Activated naive CD8-positive, alpha-beta T cell treated with anti-CD3 and anti-CD28 coated beads, Interleukin-2, amount 10 ng/mL, durations not matched to agents 7 days and 5 days (primary cell): ENCODE measurements at regions of chr17 and their contacts with region 1.

Region 1: GRCh38 chr17:42554250-42555121 is 1.8 kb downstream of the HSD17B1 start:
- DNase-seq: peak; percentile 87
- ATAC-seq: peak; percentile 92
- H3K4me3 Mint-ChIP-seq: peak overlapping the region; percentile 94
- H3K27ac Mint-ChIP-seq: peak overlapping the region; percentile 94
- H3K4me1 Mint-ChIP-seq: peaks cover 14% of the 10 kb centered on the region
- H3K27me3 Mint-ChIP-seq: no peaks in the 10 kb centered on the region

Region 2: DNA sequence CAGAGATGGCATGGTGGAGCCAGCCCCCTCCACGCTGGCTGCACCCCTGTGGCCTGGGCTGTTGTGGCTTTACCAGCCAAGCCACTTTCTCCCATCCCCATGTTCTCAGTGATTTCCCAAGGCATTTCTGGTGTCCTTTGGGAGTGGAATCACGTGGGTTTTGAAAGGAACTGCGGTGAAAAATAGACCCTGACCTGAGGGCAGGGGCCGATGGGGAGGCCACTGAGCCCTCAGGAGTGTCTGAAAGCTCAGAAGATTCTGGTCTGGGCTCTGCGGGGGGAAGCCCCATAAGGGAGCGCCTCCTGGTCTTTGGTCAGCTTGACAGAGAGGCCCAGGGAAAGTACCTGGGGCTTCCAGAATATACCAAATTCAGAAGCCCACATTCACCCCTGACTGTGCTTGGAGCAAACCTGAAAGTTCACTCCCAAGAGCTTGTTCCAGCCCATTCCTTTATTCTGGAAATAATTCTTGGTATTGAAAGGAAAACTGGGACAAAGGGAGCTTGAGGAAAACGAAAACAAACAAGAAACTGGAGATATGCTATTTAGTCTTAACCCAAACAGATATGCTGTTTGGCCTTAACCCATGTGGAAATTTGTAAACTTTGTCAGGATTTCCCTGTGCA is 41.7 kb before region 1 on chr17:
- POLR2A ChIA-PET with region 1: no interaction called
- DNase-seq: no peak
- ATAC-seq: no peak
- H3K4me3 Mint-ChIP-seq: no peak overlapping the region
- H3K27ac Mint-ChIP-seq: no peak overlapping the region
- H3K4me1 Mint-ChIP-seq: peaks cover 12% of the 10 kb centered on the region
- H3K27me3 Mint-ChIP-seq: peaks cover 4% of the 10 kb centered on the region

Region 3: GRCh38 chr17:42536048-42536371 is 18.5 kb before region 1 on chr17 and contains the start of gene NAGLU:
- POLR2A ChIA-PET with region 1: interaction called, 19 read pairs
- DNase-seq: peak; percentile 91
- ATAC-seq: peak; percentile 87
- H3K4me3 Mint-ChIP-seq: peak within 1 kb of the TSS; percentile 88
- H3K27ac Mint-ChIP-seq: peak within 1 kb of the TSS; percentile 79
- H3K4me1 Mint-ChIP-seq: peaks cover 37% of the 10 kb centered on the region
- H3K27me3 Mint-ChIP-seq: peaks cover 2% of the 10 kb centered on the region
- total RNA-seq, gene NAGLU: 22.9 to 23.9 TPM

Region 4: GRCh38 chr17:42541041-42541833 is 13.2 kb before region 1 on chr17:
- POLR2A ChIA-PET with region 1: interaction called, 19 read pairs
- DNase-seq: peak; percentile 64
- ATAC-seq: peak; percentile 37
- H3K4me3 Mint-ChIP-seq: peak overlapping the region; percentile 78
- H3K27ac Mint-ChIP-seq: peak overlapping the region; percentile 88
- H3K4me1 Mint-ChIP-seq: peaks cover 32% of the 10 kb centered on the region
- H3K27me3 Mint-ChIP-seq: no peaks in the 10 kb centered on the region

Region 5: GRCh38 chr17:42566883-42567573 is 12.5 kb after region 1 on chr17 and contains the start of gene MLX:
- POLR2A ChIA-PET with region 1: interaction called, 21 read pairs
- DNase-seq: peak; percentile 96
- ATAC-seq: peak; percentile 74
- H3K4me3 Mint-ChIP-seq: peak within 1 kb of the TSS; percentile 97
- H3K27ac Mint-ChIP-seq: peak within 1 kb of the TSS; percentile 98
- H3K4me1 Mint-ChIP-seq: peaks cover 35% of the 10 kb centered on the region
- H3K27me3 Mint-ChIP-seq: no peaks in the 10 kb centered on the region
- total RNA-seq, gene MLX: 62.9 to 64.9 TPM

Region 6: GRCh38 chr17:42586514-42587230 is 32.2 kb after region 1 on chr17:
- POLR2A ChIA-PET with region 1: no interaction called
- DNase-seq: no peak
- ATAC-seq: no peak
- H3K4me3 Mint-ChIP-seq: no peak overlapping the region
- H3K27ac Mint-ChIP-seq: no peak overlapping the region
- H3K4me1 Mint-ChIP-seq: peaks cover 6% of the 10 kb centered on the region
- H3K27me3 Mint-ChIP-seq: no peaks in the 10 kb centered on the region

Region 7: DNA sequence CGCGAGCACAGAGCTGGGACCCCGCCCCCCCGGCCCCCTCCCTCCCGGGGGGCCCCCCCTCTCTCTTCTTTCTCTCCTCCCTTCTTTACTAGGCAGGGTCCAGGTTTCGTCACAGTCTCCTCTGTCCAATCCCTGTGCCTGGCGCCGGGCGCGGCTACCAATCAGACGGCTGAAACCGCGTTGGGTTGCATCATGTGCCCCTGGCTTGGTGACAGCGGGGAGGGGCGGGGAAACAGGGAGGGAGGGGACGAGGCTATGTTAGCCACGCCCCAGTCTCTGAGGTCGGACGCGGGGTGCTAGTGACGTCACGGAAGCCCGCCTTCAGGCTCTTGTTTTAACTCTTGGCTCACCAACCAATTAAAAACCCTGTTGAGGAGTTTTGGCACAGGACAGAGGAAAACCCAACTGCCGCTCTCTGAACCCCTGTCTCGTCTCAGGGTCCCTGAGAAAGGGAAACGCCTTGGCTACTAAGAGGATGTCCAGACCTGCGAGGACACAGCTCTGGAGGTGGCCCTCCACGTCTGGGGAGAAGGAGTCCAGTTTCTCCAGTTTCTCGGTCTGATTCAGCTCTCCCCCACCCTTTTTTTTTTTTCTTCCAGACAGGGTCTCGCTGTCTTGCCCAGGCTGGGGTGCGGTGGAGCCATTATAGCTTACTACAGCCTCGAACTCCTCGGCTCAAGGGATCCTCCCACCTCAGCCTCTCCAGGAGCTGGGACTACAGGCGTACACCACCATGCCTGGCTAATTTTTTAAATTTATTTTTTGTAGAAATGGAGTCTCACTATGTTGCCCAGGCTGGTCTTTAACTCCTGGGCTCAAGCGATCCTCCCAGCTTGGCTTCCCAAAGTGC is 122.7 kb after region 1 on chr17:
- POLR2A ChIA-PET with region 1: interaction called, 10 read pairs
- DNase-seq: peak; percentile 94
- ATAC-seq: peak; percentile 84
- H3K4me3 Mint-ChIP-seq: peak overlapping the region; percentile 93
- H3K27ac Mint-ChIP-seq: peak overlapping the region; percentile 67
- H3K4me1 Mint-ChIP-seq: peaks cover 45% of the 10 kb centered on the region
- H3K27me3 Mint-ChIP-seq: peaks cover 46% of the 10 kb centered on the region